Mammary epithelial cell (primary cell): ENCODE measurements at regions of chr2 and their contacts with region 1.

Region 1: DNA sequence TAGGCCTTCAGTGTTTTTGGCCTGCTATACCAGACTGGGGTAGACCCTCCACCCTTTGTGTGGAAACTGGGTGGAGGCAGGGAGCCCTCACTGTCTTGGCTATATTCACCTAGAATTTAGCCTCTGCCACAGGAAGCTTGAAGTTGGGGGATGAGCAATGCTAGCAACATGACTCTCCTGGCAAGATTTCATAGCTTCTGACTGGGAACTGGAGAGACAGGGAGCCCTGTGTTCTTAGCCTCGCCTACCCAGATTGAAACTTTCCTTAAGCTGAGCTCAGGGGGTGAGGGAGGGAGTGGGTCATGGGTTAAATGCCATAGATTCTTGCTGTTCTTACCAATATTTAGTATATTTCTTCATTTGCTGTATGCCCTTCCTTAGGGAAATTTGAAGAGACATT is 46.8 kb upstream of the FAM98A start:
- DNase-seq: peak; percentile 14
- H3K4me3 ChIP-seq: no peak overlapping the region
- H3K27ac ChIP-seq: no peak overlapping the region
- H3K4me1 ChIP-seq: no peaks in the 10 kb centered on the region
- H3K27me3 ChIP-seq: no peaks in the 10 kb centered on the region
- CTCF ChIP-seq: no peak

Region 2: GRCh38 chr2:33709951-33710350 is 64.1 kb after region 1 on chr2:
- CTCF ChIA-PET with region 1: no interaction called
- dilution Hi-C with region 1: no loop called
- in situ Hi-C with region 1: no loop called
- intact Hi-C with region 1: loop called (anchors 2 kb)
- DNase-seq: no peak
- H3K4me3 ChIP-seq: no peak overlapping the region
- H3K27ac ChIP-seq: no peak overlapping the region
- H3K4me1 ChIP-seq: no peaks in the 10 kb centered on the region
- H3K27me3 ChIP-seq: no peaks in the 10 kb centered on the region
- CTCF ChIP-seq: no peak

Region 3: DNA sequence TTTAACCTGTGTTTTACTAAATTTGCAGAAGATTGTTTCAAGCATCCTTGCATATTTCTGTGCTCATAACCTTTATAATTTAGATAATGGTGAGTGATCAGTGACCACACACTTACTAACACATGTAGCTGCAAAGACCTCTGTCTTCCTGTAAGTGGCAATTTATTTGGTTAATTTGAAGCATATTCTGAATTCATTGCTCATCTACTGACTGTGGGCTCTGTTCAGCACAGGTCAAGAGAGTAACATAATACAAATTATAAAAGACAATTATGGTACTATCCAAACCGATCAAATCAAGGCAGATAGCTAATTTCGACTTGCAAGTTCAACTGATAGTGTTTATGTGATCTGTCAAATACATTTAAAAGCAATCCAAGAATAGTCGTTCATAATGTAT is 177.1 kb after region 1 on chr2:
- CTCF ChIA-PET with region 1: no interaction called
- dilution Hi-C with region 1: no loop called
- in situ Hi-C with region 1: no loop called
- intact Hi-C with region 1: no loop called
- DNase-seq: no peak
- H3K4me3 ChIP-seq: no peak overlapping the region
- H3K27ac ChIP-seq: no peak overlapping the region
- H3K4me1 ChIP-seq: no peaks in the 10 kb centered on the region
- H3K27me3 ChIP-seq: no peaks in the 10 kb centered on the region
- CTCF ChIP-seq: no peak